Naive thymus-derived CD4-positive, alpha-beta T cell (primary cell): ENCODE measurements at regions of chr12 and their contacts with region 1.

Region 1: DNA sequence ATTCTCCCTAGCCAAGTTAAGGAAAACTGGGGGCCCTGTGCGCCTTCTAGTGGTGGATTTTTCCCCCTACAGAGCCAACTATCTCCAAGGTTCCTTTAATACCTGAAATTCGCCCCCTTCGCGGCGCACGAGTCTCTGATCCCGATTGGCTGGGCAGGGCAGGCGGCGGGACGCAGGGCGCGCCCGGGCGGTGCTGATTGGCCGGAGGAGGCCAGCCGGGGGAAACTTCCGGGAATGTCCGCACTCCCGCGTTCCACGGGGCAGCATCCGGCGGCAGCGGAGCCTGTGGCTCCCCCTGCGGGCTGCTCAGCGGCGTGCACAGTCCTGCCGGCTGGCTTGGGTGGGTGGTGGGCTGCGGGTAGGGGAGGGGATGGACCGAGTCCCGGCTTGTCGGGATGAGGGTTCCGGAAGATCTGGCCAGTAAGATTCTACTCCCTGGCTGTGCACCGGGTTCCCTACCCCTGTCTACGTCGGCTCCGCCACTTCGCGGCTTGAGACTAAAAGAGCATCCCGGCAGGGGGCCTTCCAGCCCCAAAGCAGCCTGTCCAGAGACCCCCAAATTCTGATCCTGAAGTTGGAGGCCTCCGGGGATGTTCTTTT is at the start of gene NABP2:
- DNase-seq: peak; percentile 78 to 97 (median 81)
- ATAC-seq: peak; percentile 85
- H3K4me3 ChIP-seq: peak within 1 kb of the TSS; percentile 82
- H3K4me3 Mint-ChIP-seq: peak within 1 kb of the TSS; percentile 77 to 99 (median 87)
- H3K27ac ChIP-seq: peak within 1 kb of the TSS; percentile 98
- H3K27ac Mint-ChIP-seq: peak within 1 kb of the TSS; percentile 78 to 100 (median 91)
- H3K4me1 ChIP-seq: peaks cover 22 to 27% of the 10 kb centered on the region in 2 donors
- H3K4me1 Mint-ChIP-seq: peaks cover 16 to 57% (median 46%) of the 10 kb centered on the region in 7 donors
- H3K27me3 ChIP-seq: no peaks in the 10 kb centered on the region
- H3K27me3 Mint-ChIP-seq: peaks cover 0 to 3% (median 0%) of the 10 kb centered on the region in 5 donors
- total RNA-seq, gene NABP2: 9.2 to 61.2 (median 11.8) TPM

Region 2: GRCh38 chr12:55629058-55629841 is 595.0 kb before region 1 on chr12:
- CTCF ChIA-PET with region 1: no interaction called
- POLR2A ChIA-PET with region 1: no interaction called
- intact Hi-C with region 1: no loop called
- DNase-seq: no peak
- ATAC-seq: peak; percentile 18
- H3K4me3 ChIP-seq: no peak overlapping the region
- H3K4me3 Mint-ChIP-seq: peak overlapping the region in 1 of 10 donors; percentile 2
- H3K27ac ChIP-seq: no peak overlapping the region
- H3K27ac Mint-ChIP-seq: peak overlapping the region in 2 of 9 donors; percentile 13 to 53
- H3K4me1 ChIP-seq: no peaks in the 10 kb centered on the region
- H3K4me1 Mint-ChIP-seq: peaks cover 0 to 11% (median 6%) of the 10 kb centered on the region in 7 donors
- H3K27me3 ChIP-seq: no peaks in the 10 kb centered on the region
- H3K27me3 Mint-ChIP-seq: peaks cover 0 to 8% (median 7%) of the 10 kb centered on the region in 5 donors

Region 3: GRCh38 chr12:55996715-55997534 is 227.3 kb before region 1 on chr12 and contains the start of gene SUOX:
- CTCF ChIA-PET with region 1: no interaction called
- POLR2A ChIA-PET with region 1: no interaction called
- intact Hi-C with region 1: loop called in 1 of 2 experiments (anchors 2 kb)
- DNase-seq: peak in 3 of 9 donors; percentile 8 to 58 (median 31)
- ATAC-seq: peak; percentile 93
- H3K4me3 ChIP-seq: no peak within 1 kb of the TSS
- H3K4me3 Mint-ChIP-seq: peak within 1 kb of the TSS; percentile 49 to 87 (median 62)
- H3K27ac ChIP-seq: no peak within 1 kb of the TSS
- H3K27ac Mint-ChIP-seq: peak within 1 kb of the TSS in 7 of 9 donors; percentile 19 to 78 (median 63)
- H3K4me1 ChIP-seq: peaks cover 0 to 14% of the 10 kb centered on the region in 2 donors
- H3K4me1 Mint-ChIP-seq: peaks cover 8 to 37% (median 16%) of the 10 kb centered on the region in 7 donors
- H3K27me3 ChIP-seq: no peaks in the 10 kb centered on the region
- H3K27me3 Mint-ChIP-seq: peaks cover 0 to 4% (median 0%) of the 10 kb centered on the region in 5 donors
- total RNA-seq, gene SUOX: 1.9 to 10.4 (median 7.1) TPM

Region 4: DNA sequence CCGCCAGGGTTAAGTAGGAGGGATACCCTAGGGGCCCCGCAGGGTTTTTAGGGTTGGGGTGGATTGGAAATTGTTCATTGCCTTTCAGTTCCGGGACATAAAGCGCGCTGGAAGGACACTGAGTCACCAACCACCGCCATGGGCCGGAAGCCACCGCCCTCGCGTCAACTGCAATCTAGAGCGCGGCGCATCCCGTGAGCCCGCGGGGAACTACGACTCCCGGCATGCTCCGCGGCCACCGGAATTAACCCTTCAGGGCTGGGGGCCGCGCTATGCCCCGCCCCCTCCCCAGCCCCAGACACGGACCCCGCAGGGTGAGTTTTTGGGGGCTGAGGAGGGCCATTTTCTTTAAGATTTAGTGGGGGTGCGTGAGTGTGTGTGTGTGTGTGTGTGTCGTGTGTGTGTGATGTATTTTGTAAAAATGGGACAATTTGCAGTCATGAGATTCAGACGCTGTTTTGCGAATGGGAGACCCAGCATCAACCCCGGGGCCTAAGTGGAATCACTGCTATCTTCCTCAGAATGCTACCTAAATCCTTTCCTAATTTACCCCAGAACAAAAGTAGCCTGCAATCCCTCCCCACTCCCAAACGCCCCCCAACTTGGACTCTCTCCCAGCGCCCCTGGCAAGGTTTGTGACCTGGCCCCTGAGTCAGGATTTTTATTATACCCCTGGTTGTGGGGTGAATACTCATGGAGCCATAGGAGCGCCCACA is 71.7 kb before region 1 on chr12 and contains the start of gene MYL6B:
- CTCF ChIA-PET with region 1: no interaction called
- POLR2A ChIA-PET with region 1: interaction called, 13 read pairs
- intact Hi-C with region 1: loop called in 1 of 2 experiments (anchors 5 kb)
- DNase-seq: peak; percentile 79 to 94 (median 87)
- ATAC-seq: peak; percentile 98
- H3K4me3 ChIP-seq: peak within 1 kb of the TSS; percentile 86
- H3K4me3 Mint-ChIP-seq: peak within 1 kb of the TSS; percentile 80 to 96 (median 92)
- H3K27ac ChIP-seq: peak within 1 kb of the TSS; percentile 80
- H3K27ac Mint-ChIP-seq: peak within 1 kb of the TSS; percentile 84 to 99 (median 97)
- H3K4me1 ChIP-seq: peaks cover 22 to 25% of the 10 kb centered on the region in 2 donors
- H3K4me1 Mint-ChIP-seq: peaks cover 17 to 55% (median 39%) of the 10 kb centered on the region in 7 donors
- H3K27me3 ChIP-seq: no peaks in the 10 kb centered on the region
- H3K27me3 Mint-ChIP-seq: no peaks in the 10 kb centered on the region
- total RNA-seq, gene MYL6B: 3.7 to 60.3 (median 8.9) TPM

Region 5: GRCh38 chr12:56206457-56207166 is 17.6 kb before region 1 on chr12:
- CTCF ChIA-PET with region 1: interaction called, 18 read pairs
- POLR2A ChIA-PET with region 1: interaction called, 40 read pairs
- intact Hi-C with region 1: loop called in 1 of 2 experiments (anchors 1 kb)
- DNase-seq: peak in 5 of 9 donors; percentile 13 to 37 (median 29)
- ATAC-seq: peak; percentile 70
- H3K4me3 ChIP-seq: no peak overlapping the region
- H3K4me3 Mint-ChIP-seq: no peak overlapping the region
- H3K27ac ChIP-seq: no peak overlapping the region
- H3K27ac Mint-ChIP-seq: peak overlapping the region in 6 of 9 donors; percentile 6 to 74 (median 33)
- H3K4me1 ChIP-seq: no peaks in the 10 kb centered on the region
- H3K4me1 Mint-ChIP-seq: peaks cover 0 to 9% (median 6%) of the 10 kb centered on the region in 7 donors
- H3K27me3 ChIP-seq: no peaks in the 10 kb centered on the region
- H3K27me3 Mint-ChIP-seq: no peaks in the 10 kb centered on the region

Region 6: DNA sequence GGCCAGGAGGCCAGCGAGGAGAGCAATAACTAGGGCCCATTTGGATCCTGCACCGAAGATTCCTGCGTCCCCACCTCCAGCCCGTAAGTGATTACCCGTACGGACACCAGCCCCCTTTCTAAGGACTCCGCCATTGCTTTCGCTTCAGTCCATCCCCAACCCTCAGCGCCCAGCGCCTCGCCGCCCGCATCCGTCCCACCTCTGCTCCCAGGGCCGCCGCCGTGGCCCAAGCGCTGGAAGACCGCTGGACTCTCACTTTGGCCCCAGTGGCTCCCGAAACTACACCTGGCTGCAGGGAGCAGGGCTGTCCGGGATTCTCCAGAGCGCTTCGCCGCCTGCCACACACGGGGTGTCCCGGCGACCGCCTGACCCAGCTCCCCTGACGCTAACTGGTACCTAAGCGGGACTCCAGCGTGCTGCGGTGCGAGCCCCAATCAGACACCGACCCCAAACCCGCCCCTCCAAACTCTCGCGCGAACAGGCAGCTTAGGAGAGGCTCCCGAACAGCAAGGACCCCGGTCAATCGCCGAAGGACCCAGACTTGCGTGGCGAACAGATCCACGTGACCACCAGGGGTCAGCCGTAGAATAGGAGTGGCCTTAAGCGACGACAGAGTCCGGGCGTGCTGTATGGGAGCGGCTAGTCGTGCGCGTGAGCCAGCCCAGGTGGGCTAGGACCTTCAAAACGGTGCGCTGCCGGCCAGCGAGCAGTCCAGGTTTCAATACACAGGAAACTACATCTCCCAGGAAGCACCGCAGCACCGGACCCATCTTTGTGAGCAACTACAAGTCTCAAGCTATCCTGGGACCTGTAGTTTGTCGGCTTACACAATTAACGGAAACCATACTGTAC is 91.6 kb after region 1 on chr12 and contains the start of gene CNPY2:
- CTCF ChIA-PET with region 1: interaction called, 4 read pairs
- POLR2A ChIA-PET with region 1: interaction called, 7 read pairs
- intact Hi-C with region 1: loop called (anchors 1 kb)
- DNase-seq: peak; percentile 83 to 94 (median 92)
- ATAC-seq: peak; percentile 93
- H3K4me3 ChIP-seq: peak within 1 kb of the TSS; percentile 100
- H3K4me3 Mint-ChIP-seq: peak within 1 kb of the TSS; percentile 96 to 99 (median 98)
- H3K27ac ChIP-seq: peak within 1 kb of the TSS; percentile 97
- H3K27ac Mint-ChIP-seq: peak within 1 kb of the TSS; percentile 93 to 99 (median 99)
- H3K4me1 ChIP-seq: peaks cover 13 to 16% of the 10 kb centered on the region in 2 donors
- H3K4me1 Mint-ChIP-seq: peaks cover 5 to 23% (median 13%) of the 10 kb centered on the region in 7 donors
- H3K27me3 ChIP-seq: no peaks in the 10 kb centered on the region
- H3K27me3 Mint-ChIP-seq: no peaks in the 10 kb centered on the region
- total RNA-seq, gene CNPY2: 48.4 to 134 (median 87.6) TPM

Region 7: GRCh38 chr12:56468216-56469006 is 244.2 kb after region 1 on chr12 and contains the start of gene SPRYD4:
- CTCF ChIA-PET with region 1: interaction called, 5 read pairs
- POLR2A ChIA-PET with region 1: interaction called, 16 read pairs
- intact Hi-C with region 1: loop called in 1 of 2 experiments (anchors 1 kb)
- DNase-seq: peak; percentile 89 to 97 (median 96)
- ATAC-seq: peak; percentile 99
- H3K4me3 ChIP-seq: peak within 1 kb of the TSS; percentile 99
- H3K4me3 Mint-ChIP-seq: peak within 1 kb of the TSS; percentile 90 to 99 (median 97)
- H3K27ac ChIP-seq: peak within 1 kb of the TSS; percentile 87
- H3K27ac Mint-ChIP-seq: peak within 1 kb of the TSS; percentile 92 to 99 (median 98)
- H3K4me1 ChIP-seq: peaks cover 12 to 20% of the 10 kb centered on the region in 2 donors
- H3K4me1 Mint-ChIP-seq: peaks cover 6 to 51% (median 26%) of the 10 kb centered on the region in 7 donors
- H3K27me3 ChIP-seq: no peaks in the 10 kb centered on the region
- H3K27me3 Mint-ChIP-seq: no peaks in the 10 kb centered on the region
- total RNA-seq, gene SPRYD4: 5.2 to 7.5 (median 7.2) TPM

Region 8: GRCh38 chr12:56695327-56696101 is 471.3 kb after region 1 on chr12:
- CTCF ChIA-PET with region 1: no interaction called
- POLR2A ChIA-PET with region 1: no interaction called
- intact Hi-C with region 1: no loop called
- DNase-seq: no peak
- ATAC-seq: no peak
- H3K4me3 ChIP-seq: no peak overlapping the region
- H3K4me3 Mint-ChIP-seq: no peak overlapping the region
- H3K27ac ChIP-seq: no peak overlapping the region
- H3K27ac Mint-ChIP-seq: peak overlapping the region in 3 of 9 donors; percentile 14 to 78 (median 37)
- H3K4me1 ChIP-seq: no peaks in the 10 kb centered on the region
- H3K4me1 Mint-ChIP-seq: peaks cover 0 to 6% (median 0%) of the 10 kb centered on the region in 7 donors
- H3K27me3 ChIP-seq: no peaks in the 10 kb centered on the region
- H3K27me3 Mint-ChIP-seq: peaks cover 0 to under 1% (median 0%) of the 10 kb centered on the region in 5 donors